ENCODE measurements at regions of chr11 and their contacts with region 1.

Region 1: DNA sequence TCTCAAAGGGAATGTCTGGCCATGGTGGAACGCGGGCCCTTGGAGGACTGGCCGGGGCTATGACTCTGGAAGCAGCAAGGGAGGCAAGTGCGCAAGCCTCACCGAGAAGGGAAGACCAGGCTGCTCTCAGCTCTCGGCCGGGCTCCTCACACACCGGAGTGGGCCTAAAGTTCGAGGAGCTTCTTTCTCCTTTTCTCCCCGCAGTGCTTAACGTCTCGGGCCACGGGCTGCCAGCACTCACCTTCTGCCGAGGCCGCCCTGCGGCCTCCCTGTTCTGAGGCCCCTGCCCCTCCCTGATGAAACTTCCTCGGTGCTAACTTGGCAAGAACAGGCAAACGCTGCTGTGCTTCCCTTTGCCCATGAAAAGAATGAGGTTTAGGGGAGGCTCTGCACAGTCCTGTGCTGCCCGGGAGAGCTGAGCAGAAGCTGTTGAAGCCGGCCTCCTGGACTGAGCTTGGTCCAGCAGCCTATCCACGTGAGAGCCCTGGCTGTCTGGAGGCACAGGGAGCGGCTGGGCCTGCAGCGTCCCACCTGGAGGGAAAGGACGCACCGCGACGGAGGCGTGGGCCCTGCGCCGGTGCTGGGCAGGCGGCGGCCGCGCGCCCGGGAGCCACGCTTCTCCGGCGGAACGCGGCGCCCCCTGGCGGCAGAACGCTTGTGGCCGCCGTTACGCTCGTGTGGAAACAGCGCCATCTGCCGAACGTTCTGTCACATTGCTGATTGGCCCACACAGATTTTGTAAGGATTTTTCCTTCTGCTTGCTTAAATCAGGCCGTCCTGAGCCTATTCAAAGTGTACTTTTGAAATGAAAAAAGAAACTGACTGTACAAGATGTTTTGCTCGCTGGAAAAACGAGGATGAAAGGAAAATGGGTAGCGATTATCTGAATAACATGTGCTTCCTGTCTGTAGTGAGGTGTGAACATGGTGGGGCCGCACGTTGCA is 65.0 kb upstream of the TMEM45B start:
- DNase-seq: peak; percentile 92

Region 2: GRCh38 chr11:129117595-129118350 is 632.8 kb before region 1 on chr11:
- intact Hi-C with region 1: loop called (anchors 5 kb)
- DNase-seq: no peak

Region 3: DNA sequence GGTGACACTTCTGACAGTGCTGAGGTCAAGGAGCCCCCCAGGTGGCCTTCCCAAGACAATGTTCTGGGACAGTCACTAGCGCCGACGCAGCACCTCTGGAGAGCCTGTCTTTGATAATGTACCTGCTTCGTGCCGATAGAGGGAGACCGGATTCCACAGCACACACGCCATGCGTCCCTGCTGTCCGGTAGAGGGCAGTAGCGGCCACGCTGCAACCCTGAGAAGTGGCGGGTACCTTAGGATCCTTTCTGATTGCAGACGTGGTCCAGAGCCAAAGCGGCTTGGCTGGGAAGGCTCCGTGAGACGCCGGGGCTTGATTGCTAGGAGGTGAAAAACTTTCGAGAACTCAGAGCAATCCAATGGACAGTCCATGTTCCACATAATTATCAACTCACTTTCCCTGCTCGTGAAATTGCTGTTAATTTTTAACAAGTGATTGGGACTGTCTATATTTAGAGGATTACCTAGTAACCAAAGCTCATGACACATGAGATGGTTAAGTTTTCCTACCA is 386.4 kb before region 1 on chr11:
- intact Hi-C with region 1: loop called (anchors 5 kb)
- DNase-seq: peak; percentile 84

Measured in cardiac septum (tissue), 1 donor.